ENCODE measurements at regions of chr18 and their contacts with region 1.

Region 1: DNA sequence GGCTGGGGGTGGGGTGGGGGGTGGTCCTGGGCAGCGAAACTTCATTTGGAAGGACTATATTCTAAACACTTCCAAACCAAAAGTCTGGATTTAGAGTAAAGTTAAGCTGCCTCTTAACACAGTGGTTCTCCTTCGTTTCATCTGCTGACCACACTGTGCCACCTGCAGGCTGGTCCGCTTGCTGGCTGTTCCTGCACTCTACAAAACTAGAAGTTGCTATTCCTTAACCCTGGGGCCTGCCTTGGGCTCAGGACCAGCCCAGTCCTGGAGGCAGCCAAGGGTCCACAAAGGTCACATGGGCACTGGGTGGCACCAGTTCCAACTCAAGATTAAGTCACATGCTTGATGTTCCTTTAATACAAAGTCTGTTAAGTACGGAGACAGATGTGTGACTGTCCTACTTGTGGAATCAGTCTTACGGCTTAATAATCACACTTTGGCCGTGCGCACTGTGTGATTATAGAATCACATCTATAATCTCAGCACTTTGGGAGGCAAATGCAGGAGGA is 195.4 kb downstream of the FAM210A start:
- DNase-seq: peak; percentile 48
- CTCF ChIP-seq: peak; percentile 58

Region 2: DNA sequence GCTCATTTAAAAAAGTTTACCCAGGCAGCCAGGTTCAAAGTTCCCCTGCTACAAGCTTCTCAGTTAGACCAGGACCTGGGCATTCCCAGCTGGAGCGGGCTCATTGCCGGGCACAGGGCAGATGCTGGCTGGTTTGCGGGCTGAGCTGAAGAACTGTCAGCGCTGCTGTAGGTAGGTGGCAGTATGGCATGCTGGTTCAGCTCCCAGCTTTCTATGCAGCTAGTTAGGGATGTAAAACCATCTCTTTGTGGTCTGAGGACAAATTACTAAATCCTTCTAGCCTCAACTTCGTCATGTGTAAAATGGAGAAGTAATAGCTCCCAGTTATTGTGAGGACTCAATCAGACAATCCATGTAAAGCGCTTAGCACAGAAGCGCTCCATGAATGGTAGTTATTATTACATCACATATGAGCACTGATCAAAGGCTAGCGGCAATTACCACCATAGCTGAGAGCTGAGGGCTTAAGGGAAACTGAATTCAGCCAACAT is 314.8 kb before region 1 on chr18:
- CTCF ChIA-PET with region 1: interaction called, 14 read pairs
- POLR2A ChIA-PET with region 1: no interaction called
- DNase-seq: peak; percentile 55
- CTCF ChIP-seq: peak; percentile 52

Region 3: DNA sequence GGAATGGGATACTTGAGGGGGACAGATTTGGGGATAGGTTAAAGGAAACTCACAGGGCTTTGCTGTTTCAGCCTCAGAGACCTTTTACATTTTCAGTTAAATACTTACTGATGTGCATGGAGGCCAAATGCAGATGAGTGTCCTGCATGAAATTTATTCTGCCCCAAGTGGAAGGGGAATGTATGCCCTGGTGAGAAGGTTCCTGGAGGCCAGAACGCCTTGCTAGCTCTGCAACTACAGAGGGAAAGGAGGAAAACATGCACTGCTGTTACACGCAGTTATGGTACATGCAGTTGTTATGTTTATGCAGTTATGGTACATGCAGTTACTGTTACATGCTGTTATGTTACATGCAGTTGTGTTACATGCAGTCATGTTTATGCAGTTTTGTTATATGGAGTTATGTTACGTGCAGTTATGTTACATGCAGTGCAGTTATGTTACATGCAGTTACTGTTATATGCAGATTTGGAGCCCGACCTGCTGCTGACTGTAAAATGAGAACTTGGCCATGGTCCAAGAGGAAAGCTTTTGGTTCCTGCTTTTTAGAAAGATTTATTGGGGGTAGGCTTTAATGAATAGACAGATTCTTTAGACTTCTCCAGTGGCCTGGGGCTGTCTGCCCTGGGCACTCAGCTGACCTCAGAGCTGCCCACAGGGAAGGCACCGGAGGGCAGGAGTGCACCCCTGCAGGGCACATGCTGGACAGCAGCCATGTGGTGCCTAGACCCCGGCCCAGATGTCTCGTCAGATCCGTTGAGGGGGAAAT is 228.3 kb before region 1 on chr18:
- CTCF ChIA-PET with region 1: no interaction called
- POLR2A ChIA-PET with region 1: no interaction called
- DNase-seq: no peak
- CTCF ChIP-seq: no peak

Region 4: DNA sequence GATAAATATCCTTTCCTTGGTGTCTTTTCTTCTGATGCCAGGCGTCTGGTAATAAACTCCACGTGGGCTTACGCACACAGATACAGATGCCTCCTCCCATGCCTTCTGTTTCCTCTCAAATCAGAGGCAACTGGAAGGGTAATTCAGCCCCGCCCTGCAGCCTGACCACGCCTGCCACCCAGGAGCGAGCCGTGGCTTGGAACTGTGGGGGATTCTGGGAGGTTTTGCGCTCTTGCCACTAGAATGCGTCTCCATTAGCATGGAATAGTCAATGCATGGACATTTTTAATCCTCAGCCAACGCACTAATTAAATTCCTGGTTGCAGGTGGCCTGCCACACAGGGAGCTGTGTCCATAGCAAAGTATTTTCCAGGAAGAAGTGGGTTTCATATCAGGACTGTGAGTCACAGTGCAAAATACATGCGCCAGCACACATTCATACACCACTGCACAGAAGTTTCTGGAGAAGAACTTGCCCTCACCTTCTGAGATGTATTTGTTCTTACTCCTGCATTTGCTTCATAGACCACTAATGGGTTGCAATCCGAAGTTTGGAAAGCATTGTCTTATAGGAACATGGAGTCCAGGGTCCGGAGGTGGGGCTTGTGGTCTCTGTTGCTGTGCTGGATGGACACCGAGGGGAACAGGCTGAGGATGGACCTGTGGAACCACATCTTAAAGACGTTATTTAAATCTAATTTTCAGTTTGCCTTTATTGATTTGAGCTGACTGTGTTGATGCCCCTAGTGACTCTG is 161.0 kb before region 1 on chr18:
- CTCF ChIA-PET with region 1: no interaction called
- POLR2A ChIA-PET with region 1: no interaction called
- DNase-seq: no peak
- CTCF ChIP-seq: no peak

Region 5: GRCh38 chr18:13464432-13465123 is 66.4 kb before region 1 on chr18:
- CTCF ChIA-PET with region 1: no interaction called
- POLR2A ChIA-PET with region 1: no interaction called
- DNase-seq: peak; percentile 79
- CTCF ChIP-seq: no peak

Region 6: GRCh38 chr18:13513021-13513420 is 17.9 kb before region 1 on chr18:
- CTCF ChIA-PET with region 1: interaction called, 14 read pairs
- POLR2A ChIA-PET with region 1: no interaction called
- DNase-seq: no peak
- CTCF ChIP-seq: no peak